ENCODE measurements at regions of chr3 and their contacts with region 1.

Region 1: DNA sequence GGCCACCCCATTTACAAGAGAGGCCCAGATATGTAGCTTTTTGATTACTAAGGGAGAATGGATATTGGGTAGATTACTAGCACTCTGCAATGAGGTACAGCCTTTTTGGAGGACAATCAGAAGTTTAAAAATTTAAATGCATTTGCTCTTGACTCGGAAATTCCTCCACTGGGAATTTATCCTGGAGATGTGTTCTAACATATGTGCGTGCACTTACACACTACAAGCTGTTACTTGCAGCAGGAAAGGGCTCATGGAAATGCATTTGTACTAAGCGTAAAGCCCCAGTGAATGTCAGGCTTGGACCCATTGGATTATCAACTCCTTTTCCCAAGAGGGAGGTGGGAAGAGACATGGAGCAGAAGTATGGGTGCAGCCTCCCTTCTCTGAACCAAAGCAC is 7.8 kb upstream of the POMGNT2 start:
- DNase-seq: no peak

Region 2: DNA sequence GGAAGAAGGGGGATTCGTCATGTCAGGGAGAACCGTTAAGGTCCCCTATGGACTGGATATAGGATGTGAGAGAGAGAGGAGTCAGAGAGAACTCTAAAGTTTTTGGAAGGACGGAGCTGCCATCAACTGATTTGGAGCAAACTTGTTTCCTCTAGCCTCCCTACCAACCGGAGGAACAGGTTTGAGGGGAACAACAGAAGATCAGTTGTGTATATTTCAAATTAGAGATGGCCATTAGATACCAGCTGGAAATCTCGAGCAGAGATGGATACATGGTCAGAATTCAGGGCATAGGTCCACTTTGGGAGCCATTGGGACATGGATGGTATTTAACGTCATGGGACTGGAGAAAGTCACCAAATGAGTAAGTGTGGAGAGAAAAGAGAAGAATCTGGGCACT is 1960.8 kb after region 1 on chr3:
- intact Hi-C with region 1: loop called in 1 of 2 experiments (anchors 5 kb)
- DNase-seq: no peak

Measured in posterior vena cava (tissue), 2 donors.